ENCODE measurements at regions of chr12 and their contacts with region 1.

Region 1: GRCh38 chr12:40525054-40525453 is 167.2 kb upstream of the CNTN1 start:
- DNase-seq: no peak
- H3K4me3 ChIP-seq: no peak overlapping the region
- H3K27ac ChIP-seq: no peak overlapping the region
- H3K4me1 ChIP-seq: no peaks in the 10 kb centered on the region
- H3K27me3 ChIP-seq: no peaks in the 10 kb centered on the region
- CTCF ChIP-seq: no peak

Region 2: GRCh38 chr12:40286583-40286982 is 238.5 kb before region 1 on chr12:
- CTCF ChIA-PET with region 1: no interaction called
- POLR2A ChIA-PET with region 1: interaction called, 15 read pairs
- intact Hi-C with region 1: no loop called
- DNase-seq: no peak
- H3K4me3 ChIP-seq: no peak overlapping the region
- H3K27ac ChIP-seq: no peak overlapping the region
- H3K4me1 ChIP-seq: no peaks in the 10 kb centered on the region
- H3K27me3 ChIP-seq: no peaks in the 10 kb centered on the region
- CTCF ChIP-seq: no peak

Region 3: DNA sequence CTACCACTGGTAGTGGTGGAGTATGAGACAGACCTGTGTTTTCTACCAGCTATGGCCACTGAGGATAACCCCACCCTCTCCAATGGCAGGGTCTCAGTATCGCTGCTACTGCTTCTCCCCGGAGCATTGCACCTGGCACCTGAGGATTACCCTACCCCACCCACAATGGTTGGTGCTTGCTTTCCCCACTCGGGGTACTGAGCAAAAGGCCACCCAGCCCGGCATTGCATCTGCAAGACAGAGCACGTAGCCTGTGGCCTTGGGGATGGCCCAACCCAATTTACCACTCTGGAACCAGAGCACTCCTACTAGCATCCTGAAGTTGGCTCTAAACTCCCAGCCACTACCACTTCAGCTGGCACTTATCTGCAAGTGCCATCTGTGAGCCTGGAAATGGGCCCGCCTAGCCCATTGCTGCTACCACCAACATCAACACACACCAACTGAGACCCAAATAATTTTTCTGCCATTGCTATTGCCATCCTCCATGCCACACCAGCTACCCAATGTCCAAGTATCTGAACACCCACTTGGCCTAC is 312.9 kb after region 1 on chr12:
- CTCF ChIA-PET with region 1: no interaction called
- POLR2A ChIA-PET with region 1: no interaction called
- intact Hi-C with region 1: no loop called
- DNase-seq: no peak
- H3K4me3 ChIP-seq: no peak overlapping the region
- H3K27ac ChIP-seq: no peak overlapping the region
- H3K4me1 ChIP-seq: no peaks in the 10 kb centered on the region
- H3K27me3 ChIP-seq: no peaks in the 10 kb centered on the region
- CTCF ChIP-seq: no peak

Measured in PC-9 (cell line).